Activated CD4-positive, alpha-beta T cell treated with anti-CD3 and anti-CD28 coated beads, Interleukin-2, amount 10 ng/mL, durations not matched to agents 24 days and 14 days (primary cell): ENCODE measurements at regions of chr4 and their contacts with region 1.

Region 1: GRCh38 chr4:168318266-168318895 is at the start of gene DDX60:
- DNase-seq: peak; percentile 96
- H3K4me3 Mint-ChIP-seq: peak within 1 kb of the TSS; percentile 83
- H3K27ac Mint-ChIP-seq: peak within 1 kb of the TSS; percentile 96
- H3K4me1 Mint-ChIP-seq: peaks cover 51% of the 10 kb centered on the region
- H3K27me3 Mint-ChIP-seq: no peaks in the 10 kb centered on the region
- total RNA-seq, gene DDX60: 15.2 and 17.6 TPM in 2 replicates

Region 2: GRCh38 chr4:168200687-168201086 is 117.7 kb before region 1 on chr4:
- intact Hi-C with region 1: no loop called
- DNase-seq: no peak
- H3K4me3 Mint-ChIP-seq: no peak overlapping the region
- H3K27ac Mint-ChIP-seq: no peak overlapping the region
- H3K4me1 Mint-ChIP-seq: no peaks in the 10 kb centered on the region
- H3K27me3 Mint-ChIP-seq: no peaks in the 10 kb centered on the region

Region 3: GRCh38 chr4:168304744-168305459 is 13.5 kb before region 1 on chr4:
- intact Hi-C with region 1: loop called (anchors 1 kb)
- DNase-seq: no peak
- H3K4me3 Mint-ChIP-seq: no peak overlapping the region
- H3K27ac Mint-ChIP-seq: no peak overlapping the region
- H3K4me1 Mint-ChIP-seq: peaks cover 33% of the 10 kb centered on the region
- H3K27me3 Mint-ChIP-seq: no peaks in the 10 kb centered on the region

Region 4: GRCh38 chr4:168480931-168481611 is 162.7 kb after region 1 on chr4:
- intact Hi-C with region 1: loop called (anchors 1 kb)
- DNase-seq: peak; percentile 85
- H3K4me3 Mint-ChIP-seq: peak overlapping the region; percentile 98
- H3K27ac Mint-ChIP-seq: peak overlapping the region; percentile 99
- H3K4me1 Mint-ChIP-seq: peaks cover 60% of the 10 kb centered on the region
- H3K27me3 Mint-ChIP-seq: no peaks in the 10 kb centered on the region